Endothelial cell of umbilical vein (primary cell): ENCODE measurements at regions of chr5 and their contacts with region 1.

Region 1: DNA sequence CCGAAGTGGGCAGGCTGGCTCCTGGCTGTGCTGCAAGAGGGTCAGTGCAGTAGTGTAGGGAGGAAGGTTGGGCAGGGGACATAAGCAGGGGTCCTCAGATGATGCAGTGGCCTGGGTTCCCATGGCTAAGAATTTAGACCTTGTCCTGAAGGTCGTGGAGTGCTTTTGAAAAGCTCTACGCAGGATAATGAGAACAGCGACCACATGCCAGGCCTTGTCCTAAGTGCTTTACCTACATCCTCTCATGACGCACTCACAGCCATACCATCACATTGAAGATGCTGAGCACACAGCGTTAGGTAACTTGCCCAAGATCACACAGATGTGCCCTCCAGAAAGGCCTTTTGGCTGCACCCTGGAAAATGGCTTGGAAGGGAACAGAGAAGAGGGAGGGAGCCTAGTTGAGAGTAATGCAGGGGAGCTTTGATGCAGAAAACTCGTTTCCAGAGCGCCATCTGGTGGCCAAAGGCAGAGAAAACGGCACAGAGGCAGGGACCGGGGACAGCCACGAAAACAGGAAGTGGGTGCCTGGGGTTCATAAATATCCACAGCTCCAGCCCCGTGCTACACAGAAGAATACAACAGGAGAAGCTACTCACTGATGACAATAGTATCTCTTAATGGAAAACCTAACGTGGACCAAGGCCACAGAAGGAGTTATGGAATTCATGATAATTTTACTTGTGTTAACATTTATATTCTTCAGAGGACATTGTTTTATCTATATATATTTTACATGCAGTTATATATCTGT is 2.6 kb upstream of the PCDH12 start:
- DNase-seq: peak; percentile 88
- H3K4me3 ChIP-seq: no peak overlapping the region
- H3K27ac ChIP-seq: no peak overlapping the region
- H3K4me1 ChIP-seq: peaks cover 31% of the 10 kb centered on the region
- H3K27me3 ChIP-seq: no peaks in the 10 kb centered on the region
- CTCF ChIP-seq: peak; percentile 80 to 86
- POLR2A ChIP-seq: no peak

Region 2: DNA sequence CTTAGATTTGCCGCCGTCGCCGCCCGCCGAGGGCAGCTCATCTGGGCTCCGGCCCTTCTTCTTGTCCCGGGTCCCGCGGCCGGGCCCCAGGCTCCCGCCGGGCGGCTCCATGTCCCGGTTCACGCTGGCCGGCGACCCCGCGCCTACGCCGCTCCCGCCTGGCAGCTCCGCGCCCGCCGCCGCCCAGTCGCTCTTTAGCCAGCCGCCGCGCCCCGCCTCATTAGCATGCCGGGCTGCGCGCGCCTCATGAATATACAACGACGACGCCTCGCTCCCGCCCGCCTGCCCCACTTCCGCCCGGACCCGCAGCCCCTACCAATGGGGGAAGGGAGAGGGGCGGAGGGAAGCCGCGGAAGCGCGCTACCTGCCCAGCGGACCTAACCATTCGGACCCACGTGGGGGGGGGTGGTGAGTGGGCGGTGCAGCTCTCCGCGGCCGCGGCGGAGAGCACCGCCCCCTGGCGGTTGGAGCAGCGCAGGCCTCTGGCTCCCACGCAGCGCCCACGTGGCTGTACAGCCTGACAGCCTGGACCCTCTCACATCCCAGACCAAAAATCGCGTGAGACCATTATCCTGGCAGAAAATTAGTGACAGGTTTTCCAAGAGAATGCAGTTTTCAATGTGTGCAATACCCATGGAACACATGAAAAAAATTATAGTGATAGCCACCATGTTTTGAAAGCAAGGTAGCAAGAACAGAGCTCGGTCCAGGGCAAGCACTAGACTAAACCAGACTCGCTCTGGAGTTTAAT is 341.6 kb before region 1 on chr5 and contains the start of gene DIAPH1:
- CTCF ChIA-PET with region 1: no interaction called
- POLR2A ChIA-PET with region 1: no interaction called
- dilution Hi-C with region 1: no loop called
- intact Hi-C with region 1: no loop called
- DNase-seq: peak; percentile 95
- H3K4me3 ChIP-seq: peak within 1 kb of the TSS; percentile 77 to 84 (median 80)
- H3K27ac ChIP-seq: peak within 1 kb of the TSS; percentile 22
- H3K4me1 ChIP-seq: peaks cover 18% of the 10 kb centered on the region
- H3K27me3 ChIP-seq: no peaks in the 10 kb centered on the region
- CTCF ChIP-seq: peak; percentile 98 to 99
- POLR2A ChIP-seq: peak; percentile 77
- total RNA-seq, gene DIAPH1: 103 and 105 TPM in 2 replicates

Region 3: GRCh38 chr5:141691867-141692532 is 268.6 kb before region 1 on chr5:
- CTCF ChIA-PET with region 1: interaction called, 282 read pairs
- POLR2A ChIA-PET with region 1: interaction called, 3 read pairs
- dilution Hi-C with region 1: no loop called
- intact Hi-C with region 1: loop called (anchors 1 kb)
- DNase-seq: peak; percentile 87
- H3K4me3 ChIP-seq: peak overlapping the region in 2 of 3 experiments; percentile 24 to 28
- H3K27ac ChIP-seq: no peak overlapping the region
- H3K4me1 ChIP-seq: peaks cover 21% of the 10 kb centered on the region
- H3K27me3 ChIP-seq: no peaks in the 10 kb centered on the region
- CTCF ChIP-seq: peak; percentile 96 to 99
- POLR2A ChIP-seq: no peak

Region 4: GRCh38 chr5:141762790-141763368 is 197.7 kb before region 1 on chr5:
- CTCF ChIA-PET with region 1: interaction called, 49 read pairs
- POLR2A ChIA-PET with region 1: no interaction called
- dilution Hi-C with region 1: no loop called
- intact Hi-C with region 1: loop called (anchors 1 kb)
- DNase-seq: no peak
- H3K4me3 ChIP-seq: no peak overlapping the region
- H3K27ac ChIP-seq: no peak overlapping the region
- H3K4me1 ChIP-seq: no peaks in the 10 kb centered on the region
- H3K27me3 ChIP-seq: peaks cover 11 to 23% of the 10 kb centered on the region in 2 experiments
- CTCF ChIP-seq: no peak
- POLR2A ChIP-seq: no peak

Region 5: DNA sequence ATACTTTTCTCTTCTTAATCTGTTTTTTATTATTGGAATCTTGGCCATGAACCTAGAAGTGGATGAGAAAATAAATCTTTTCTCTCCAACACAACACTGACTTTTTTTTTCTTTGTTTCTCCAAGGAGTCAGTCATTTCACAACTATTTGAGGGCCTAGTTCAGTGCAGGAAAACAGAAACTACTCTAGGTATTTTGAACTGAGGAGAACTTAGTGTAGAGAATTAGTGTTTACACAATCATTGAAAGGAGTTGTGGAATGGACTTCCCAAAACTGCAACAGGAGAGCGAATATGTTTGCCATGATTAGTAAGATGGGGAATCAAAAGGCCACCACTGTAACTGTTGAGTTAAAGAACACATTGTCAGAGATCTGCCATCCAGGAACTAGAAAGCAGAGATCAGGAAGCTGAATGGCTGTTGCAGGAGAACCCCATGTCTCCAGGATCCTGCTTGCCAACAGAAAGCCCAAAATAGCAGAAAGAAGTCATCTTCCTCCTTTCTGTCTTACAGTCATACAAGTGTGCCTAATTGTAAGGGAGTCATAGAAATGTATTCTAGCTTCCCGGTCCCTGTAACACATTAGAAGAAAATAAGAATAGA is 62.1 kb before region 1 on chr5:
- CTCF ChIA-PET with region 1: interaction called, 10 read pairs
- POLR2A ChIA-PET with region 1: no interaction called
- dilution Hi-C with region 1: no loop called
- intact Hi-C with region 1: no loop called
- DNase-seq: no peak
- H3K4me3 ChIP-seq: no peak overlapping the region
- H3K27ac ChIP-seq: no peak overlapping the region
- H3K4me1 ChIP-seq: no peaks in the 10 kb centered on the region
- H3K27me3 ChIP-seq: peaks cover 7 to 8% of the 10 kb centered on the region in 2 experiments
- CTCF ChIP-seq: no peak
- POLR2A ChIP-seq: no peak

Region 6: DNA sequence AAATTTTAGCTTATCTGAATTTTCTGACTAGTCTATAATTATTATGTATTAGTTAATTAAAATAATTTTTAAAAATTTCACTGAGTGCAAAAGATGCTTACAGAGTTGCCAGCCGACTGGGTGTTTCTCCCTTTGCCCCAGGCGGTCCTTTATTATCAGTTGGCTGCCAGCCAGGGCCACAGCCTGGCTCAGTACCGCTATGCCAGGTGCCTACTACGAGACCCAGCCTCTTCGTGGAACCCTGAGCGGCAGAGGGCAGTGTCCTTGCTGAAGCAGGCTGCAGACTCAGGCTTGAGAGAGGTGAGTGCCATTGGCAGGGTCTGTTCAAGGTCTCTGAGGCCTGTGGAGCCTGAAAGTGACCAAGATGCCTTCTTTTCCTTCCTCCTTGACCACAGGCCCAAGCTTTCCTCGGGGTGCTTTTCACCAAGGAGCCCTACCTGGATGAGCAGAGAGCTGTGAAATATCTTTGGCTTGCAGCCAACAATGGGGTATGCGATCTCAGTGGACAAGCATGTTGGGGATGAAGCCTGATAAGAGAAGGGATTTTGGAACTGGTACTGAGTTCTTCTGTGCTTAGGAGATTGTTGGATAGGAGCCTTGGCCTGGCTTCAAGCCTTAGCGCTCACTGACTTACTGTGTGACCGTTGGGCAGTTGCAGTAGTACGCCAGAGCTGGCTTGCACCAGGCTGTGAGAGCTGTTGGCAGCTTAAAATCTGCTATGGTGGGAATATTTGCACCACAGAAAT is 26.4 kb before region 1 on chr5:
- CTCF ChIA-PET with region 1: interaction called, 244 read pairs
- POLR2A ChIA-PET with region 1: no interaction called
- dilution Hi-C with region 1: no loop called
- intact Hi-C with region 1: no loop called
- DNase-seq: no peak
- H3K4me3 ChIP-seq: no peak overlapping the region
- H3K27ac ChIP-seq: no peak overlapping the region
- H3K4me1 ChIP-seq: no peaks in the 10 kb centered on the region
- H3K27me3 ChIP-seq: no peaks in the 10 kb centered on the region
- CTCF ChIP-seq: no peak
- POLR2A ChIP-seq: no peak